ENCODE measurements at regions of chr12 and their contacts with region 1.

Region 1: GRCh38 chr12:108664338-108665258 is 30.9 kb upstream of the SELPLG start:
- DNase-seq: peak; percentile 92
- H3K4me3 Mint-ChIP-seq: peak overlapping the region; percentile 33
- H3K27ac Mint-ChIP-seq: peak overlapping the region; percentile 83
- H3K4me1 Mint-ChIP-seq: peaks cover 23% of the 10 kb centered on the region
- H3K27me3 Mint-ChIP-seq: no peaks in the 10 kb centered on the region

Region 2: DNA sequence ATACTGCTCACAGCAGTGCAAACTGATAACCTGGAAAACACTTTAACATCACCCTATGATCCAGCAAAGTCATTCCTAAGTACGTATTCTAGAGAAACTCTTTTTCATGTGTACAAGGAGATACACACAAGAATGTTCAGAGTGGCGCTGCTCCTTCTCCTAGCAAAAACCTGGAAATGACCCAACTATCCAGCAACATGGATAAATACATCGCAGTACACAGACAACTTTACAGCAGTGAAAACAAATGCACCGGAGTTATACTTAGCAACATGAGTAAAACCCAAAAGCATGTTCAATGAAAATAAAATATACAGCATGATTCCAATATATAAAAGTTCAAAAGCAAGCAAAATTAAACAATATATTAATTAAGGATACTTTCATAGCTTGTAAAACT is 122.3 kb before region 1 on chr12:
- CTCF ChIA-PET with region 1: no interaction called
- POLR2A ChIA-PET with region 1: no interaction called
- intact Hi-C with region 1: no loop called
- DNase-seq: no peak
- H3K4me3 Mint-ChIP-seq: no peak overlapping the region
- H3K27ac Mint-ChIP-seq: no peak overlapping the region
- H3K4me1 Mint-ChIP-seq: peaks cover 16% of the 10 kb centered on the region
- H3K27me3 Mint-ChIP-seq: no peaks in the 10 kb centered on the region

Region 3: GRCh38 chr12:108570743-108571608 is 93.6 kb before region 1 on chr12:
- CTCF ChIA-PET with region 1: interaction called, 29 read pairs
- POLR2A ChIA-PET with region 1: no interaction called
- intact Hi-C with region 1: no loop called
- DNase-seq: peak; percentile 18
- H3K4me3 Mint-ChIP-seq: no peak overlapping the region
- H3K27ac Mint-ChIP-seq: no peak overlapping the region
- H3K4me1 Mint-ChIP-seq: peaks cover 76% of the 10 kb centered on the region
- H3K27me3 Mint-ChIP-seq: no peaks in the 10 kb centered on the region

Region 4: GRCh38 chr12:108649669-108650068 is 14.9 kb before region 1 on chr12:
- CTCF ChIA-PET with region 1: interaction called, 15 read pairs
- POLR2A ChIA-PET with region 1: interaction called, 5 read pairs
- intact Hi-C with region 1: no loop called
- DNase-seq: no peak
- H3K4me3 Mint-ChIP-seq: no peak overlapping the region
- H3K27ac Mint-ChIP-seq: peak overlapping the region; percentile 50
- H3K4me1 Mint-ChIP-seq: peaks cover 38% of the 10 kb centered on the region
- H3K27me3 Mint-ChIP-seq: no peaks in the 10 kb centered on the region

Region 5: GRCh38 chr12:108701779-108702441 is 37.3 kb after region 1 on chr12:
- CTCF ChIA-PET with region 1: interaction called, 10 read pairs
- POLR2A ChIA-PET with region 1: interaction called, 6 read pairs
- intact Hi-C with region 1: no loop called
- DNase-seq: peak; percentile 43
- H3K4me3 Mint-ChIP-seq: no peak overlapping the region
- H3K27ac Mint-ChIP-seq: no peak overlapping the region
- H3K4me1 Mint-ChIP-seq: peaks cover 19% of the 10 kb centered on the region
- H3K27me3 Mint-ChIP-seq: no peaks in the 10 kb centered on the region

Region 6: DNA sequence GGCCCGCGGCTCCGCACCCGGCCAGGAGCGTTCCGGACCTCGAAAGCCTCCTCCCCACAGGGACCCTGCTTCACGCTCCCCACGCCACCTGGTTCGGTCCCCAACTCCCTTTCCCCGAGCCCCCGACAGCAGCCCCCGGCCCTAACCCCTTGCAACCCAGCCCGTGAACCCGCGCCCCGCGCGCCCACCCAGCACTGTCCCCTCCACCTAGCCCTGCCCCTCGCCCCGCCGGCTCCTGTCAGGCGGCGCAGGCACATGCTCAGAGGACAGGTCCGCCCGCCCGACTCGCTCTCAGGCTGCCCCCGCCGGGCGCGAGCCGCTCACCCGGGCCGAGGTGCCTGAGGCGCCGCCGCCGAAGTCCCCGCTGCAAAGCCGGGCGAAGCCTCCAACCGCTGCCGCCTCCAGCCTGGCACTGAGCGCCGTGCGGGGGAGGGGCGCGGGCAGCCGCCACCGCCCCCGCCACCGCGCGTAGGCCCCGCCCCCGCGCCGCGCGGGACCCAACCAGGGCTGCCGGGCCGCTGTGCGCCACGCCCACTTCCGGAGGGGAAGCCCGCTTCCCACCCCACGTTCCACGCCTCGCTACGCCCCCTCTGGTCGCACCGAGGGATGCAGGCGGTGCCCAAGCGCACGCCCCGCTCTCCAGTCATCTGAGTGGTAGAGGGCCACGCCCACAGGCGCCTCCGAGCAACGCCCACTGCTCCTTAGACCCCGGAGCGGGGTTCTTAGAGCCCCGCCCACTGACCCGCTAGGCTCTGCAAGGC is 66.7 kb after region 1 on chr12 and contains the start of gene CORO1C:
- CTCF ChIA-PET with region 1: interaction called, 13 read pairs
- POLR2A ChIA-PET with region 1: no interaction called
- intact Hi-C with region 1: loop called (anchors 1 kb)
- DNase-seq: peak; percentile 97
- H3K4me3 Mint-ChIP-seq: peak within 1 kb of the TSS; percentile 91
- H3K27ac Mint-ChIP-seq: peak within 1 kb of the TSS; percentile 91
- H3K4me1 Mint-ChIP-seq: peaks cover 34% of the 10 kb centered on the region
- H3K27me3 Mint-ChIP-seq: no peaks in the 10 kb centered on the region
- total RNA-seq, gene CORO1C: 62.1 to 70.9 TPM

Region 7: GRCh38 chr12:108846290-108846701 is 181.7 kb after region 1 on chr12:
- CTCF ChIA-PET with region 1: no interaction called
- POLR2A ChIA-PET with region 1: no interaction called
- intact Hi-C with region 1: no loop called
- DNase-seq: no peak
- H3K4me3 Mint-ChIP-seq: no peak overlapping the region
- H3K27ac Mint-ChIP-seq: no peak overlapping the region
- H3K4me1 Mint-ChIP-seq: no peaks in the 10 kb centered on the region
- H3K27me3 Mint-ChIP-seq: no peaks in the 10 kb centered on the region

Region 8: GRCh38 chr12:108950991-108951739 is 286.6 kb after region 1 on chr12:
- CTCF ChIA-PET with region 1: interaction called, 32 read pairs
- POLR2A ChIA-PET with region 1: no interaction called
- intact Hi-C with region 1: loop called (anchors 1 kb)
- DNase-seq: peak; percentile 80
- H3K4me3 Mint-ChIP-seq: no peak overlapping the region
- H3K27ac Mint-ChIP-seq: no peak overlapping the region
- H3K4me1 Mint-ChIP-seq: peaks cover 2% of the 10 kb centered on the region
- H3K27me3 Mint-ChIP-seq: peaks cover 6% of the 10 kb centered on the region

Measured in activated CD4-positive, alpha-beta memory T cell treated with anti-CD3 and anti-CD28 coated beads for 36 hours (primary cell).